Right lobe of liver (tissue), 6 donors: ENCODE measurements at regions of chr20 and their contacts with region 1.

Region 1: DNA sequence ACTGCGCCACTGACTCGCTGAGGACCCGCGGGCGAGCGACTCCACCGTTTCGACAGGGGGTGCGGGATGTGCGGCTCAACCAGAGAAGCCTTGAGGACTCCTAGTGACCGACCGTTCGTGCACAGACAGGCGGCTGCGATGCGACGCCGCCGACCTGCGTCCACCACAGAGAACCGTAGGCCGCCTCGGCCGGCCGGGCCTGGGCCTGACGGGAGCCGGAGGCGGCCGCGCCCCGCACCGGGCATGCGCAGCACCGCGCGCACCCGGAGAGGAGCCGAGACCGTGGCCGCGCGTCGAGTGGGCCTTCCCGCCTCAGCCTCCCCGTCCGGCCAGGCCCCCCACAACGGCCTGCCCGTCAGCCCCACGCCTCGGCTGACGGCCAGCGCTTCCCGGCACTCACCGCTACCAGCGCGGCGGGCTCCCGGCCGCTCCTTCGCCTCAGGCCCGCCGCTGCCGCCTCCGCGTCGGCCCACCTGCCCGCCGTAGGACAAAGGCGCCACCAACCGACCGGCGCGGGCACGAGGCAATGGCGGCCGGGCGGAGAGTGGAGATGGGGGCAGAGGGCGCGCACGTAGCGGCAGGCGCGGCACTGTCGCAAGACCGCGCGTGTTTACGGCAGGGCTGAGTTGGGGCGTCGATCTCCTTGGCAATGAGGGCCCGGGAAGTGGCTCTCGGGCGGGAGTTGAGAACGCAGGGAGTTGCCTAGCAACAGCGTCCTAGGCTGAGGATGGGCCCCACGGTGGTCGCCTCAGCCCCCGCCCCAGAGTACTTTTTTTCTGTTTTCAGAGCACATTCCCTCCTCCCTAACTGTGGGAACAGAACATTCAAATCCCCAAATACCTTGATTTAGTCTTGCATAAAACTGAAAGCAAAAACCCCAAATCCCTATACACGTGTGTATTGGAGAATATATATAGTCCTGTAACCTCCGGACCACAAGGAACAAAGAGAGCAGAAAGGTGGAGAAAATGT is at the start of gene NCOA5:
- DNase-seq: peak; percentile 96 to 97 (median 96)
- ATAC-seq: peak; percentile 90 to 95 (median 94)
- H3K4me3 ChIP-seq: peak within 1 kb of the TSS; percentile 79 to 98 (median 87)
- H3K27ac ChIP-seq: peak within 1 kb of the TSS; percentile 97 to 99 (median 98)
- H3K4me1 ChIP-seq: peaks cover 0 to 40% (median 11%) of the 10 kb centered on the region in 4 donors
- H3K27me3 ChIP-seq: no peaks in the 10 kb centered on the region
- CTCF ChIP-seq: peak; percentile 6 to 50 (median 33)
- POLR2A ChIP-seq: peak; percentile 95
- total RNA-seq, gene NCOA5: 5.1 to 10.4 (median 8.8) TPM

Region 2: DNA sequence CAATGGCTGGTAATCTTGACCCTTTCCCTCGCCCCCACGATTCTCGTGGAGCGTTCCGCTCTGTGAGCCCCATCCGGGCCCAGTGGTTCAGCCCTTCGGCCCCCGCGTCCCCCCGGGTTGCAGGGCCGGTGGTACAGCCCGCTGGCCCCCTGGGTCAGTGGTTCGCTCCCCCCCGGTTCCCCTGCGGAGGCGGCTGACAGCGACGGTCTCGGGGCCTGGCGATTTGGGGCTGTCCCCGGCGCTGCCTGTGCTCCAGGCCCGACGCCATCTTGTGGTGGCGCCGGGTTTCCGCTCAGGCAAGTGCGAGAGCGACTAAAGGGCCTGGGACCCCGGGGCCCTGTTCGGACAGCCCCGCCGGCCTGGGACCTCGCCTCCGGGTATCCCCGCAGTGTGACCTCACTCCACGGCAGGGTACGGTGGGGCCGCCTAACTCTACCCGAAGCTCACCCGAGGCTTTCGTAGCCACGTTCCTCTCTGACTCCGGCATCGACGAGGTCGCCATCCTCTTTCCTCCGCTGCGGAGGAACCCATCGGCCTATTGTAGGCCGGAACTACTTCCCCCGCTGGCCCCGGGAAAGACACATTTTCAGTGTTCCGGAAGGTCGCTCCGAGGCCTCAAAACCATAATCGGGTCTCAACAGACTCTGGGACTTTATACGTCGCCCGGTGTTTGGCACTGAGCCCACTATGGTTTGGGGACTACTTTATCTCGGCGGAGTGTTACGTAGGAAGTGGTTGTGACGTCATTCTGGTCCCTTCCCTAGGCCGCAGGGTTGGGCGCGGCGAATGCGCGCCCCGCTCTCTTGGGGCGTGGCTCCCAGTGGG is 117.8 kb before region 1 on chr20 and contains the start of gene ZNF335:
- intact Hi-C with region 1: no loop called
- DNase-seq: peak; percentile 95 to 96 (median 96)
- ATAC-seq: peak; percentile 88 to 93 (median 90)
- H3K4me3 ChIP-seq: peak within 1 kb of the TSS; percentile 78 to 97 (median 81)
- H3K27ac ChIP-seq: peak within 1 kb of the TSS; percentile 98 to 99 (median 98)
- H3K4me1 ChIP-seq: peaks cover 0 to 15% (median 3%) of the 10 kb centered on the region in 4 donors
- H3K27me3 ChIP-seq: no peaks in the 10 kb centered on the region
- CTCF ChIP-seq: peak; percentile 29 to 44 (median 43)
- POLR2A ChIP-seq: peak; percentile 90
- total RNA-seq, gene ZNF335: 6.5 to 9.3 (median 7.8) TPM

Region 3: DNA sequence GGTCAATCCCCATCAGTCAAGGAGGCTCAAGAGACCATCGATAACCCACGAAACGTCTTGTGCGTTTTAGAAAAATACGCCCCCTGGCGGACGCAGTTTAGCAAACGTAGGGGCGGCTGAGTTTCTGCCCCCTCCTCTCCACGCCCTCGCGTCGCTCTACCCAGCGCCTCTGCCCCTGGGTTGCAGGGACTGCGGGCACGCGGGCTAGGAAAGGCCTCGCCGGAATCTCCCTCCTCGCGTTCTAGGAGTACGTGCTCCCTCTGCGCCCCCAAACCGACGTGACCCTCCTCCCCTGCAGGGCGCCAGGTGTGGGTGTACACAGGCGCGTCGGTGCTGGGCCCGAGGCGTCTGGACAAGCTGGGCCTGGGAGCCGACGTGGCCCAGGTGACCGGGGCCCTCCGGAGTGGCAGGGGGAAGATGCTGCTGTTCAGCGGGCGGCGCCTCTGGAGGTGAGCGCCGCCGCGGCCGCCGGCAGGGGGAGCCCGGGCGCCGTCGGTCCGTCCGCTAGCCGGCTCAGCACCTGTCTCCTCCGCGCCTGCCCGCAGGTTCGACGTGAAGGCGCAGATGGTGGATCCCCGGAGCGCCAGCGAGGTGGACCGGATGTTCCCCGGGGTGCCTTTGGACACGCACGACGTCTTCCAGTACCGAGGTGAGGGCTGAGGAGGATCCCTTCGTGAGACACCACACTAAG is 75.7 kb before region 1 on chr20:
- intact Hi-C with region 1: loop called in 1 of 2 experiments (anchors 10 kb)
- DNase-seq: peak in 2 of 3 donors; percentile 66 to 74
- ATAC-seq: peak; percentile 83 to 93 (median 88)
- H3K4me3 ChIP-seq: no peak overlapping the region
- H3K27ac ChIP-seq: no peak overlapping the region
- H3K4me1 ChIP-seq: peaks cover 0 to 11% (median 5%) of the 10 kb centered on the region in 4 donors
- H3K27me3 ChIP-seq: peaks cover 0 to 5% of the 10 kb centered on the region in 2 donors
- CTCF ChIP-seq: peak; percentile 67 to 83 (median 75)
- POLR2A ChIP-seq: no peak